Testis (tissue), 5 donors: ENCODE measurements at regions of chr3 and their contacts with region 1.

Region 1: DNA sequence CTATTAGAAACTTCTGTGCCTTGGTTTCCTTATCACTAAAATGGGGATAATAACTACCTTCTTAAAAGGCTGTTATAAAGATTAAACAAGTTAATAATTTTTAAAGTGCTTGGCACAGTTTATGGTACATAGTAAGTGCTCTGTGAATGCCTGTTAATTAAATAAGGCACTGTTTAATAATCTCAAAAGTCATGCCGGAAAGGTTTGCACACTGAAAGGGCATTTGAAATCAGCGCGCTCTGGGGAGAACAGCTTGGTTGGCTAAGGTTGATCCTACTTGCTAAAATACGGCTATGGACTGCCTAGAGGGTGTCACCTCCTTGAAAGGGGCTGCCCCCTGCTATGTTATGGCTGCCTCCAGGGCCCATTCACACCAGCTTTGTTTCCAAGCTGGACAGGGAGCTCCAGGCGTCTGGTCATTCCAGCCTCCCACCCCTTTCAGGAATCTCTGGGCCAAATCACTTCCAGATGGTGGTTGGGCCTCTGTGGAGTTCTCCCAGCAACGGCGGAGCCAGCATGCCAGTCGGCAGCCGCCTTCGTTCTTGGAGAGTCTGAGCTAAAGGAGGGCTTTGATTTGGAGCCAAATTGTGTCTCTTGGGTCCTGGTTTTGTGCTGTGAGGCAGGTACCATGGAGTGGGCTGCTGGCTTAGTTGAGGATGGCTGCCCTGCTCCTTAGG is 5.9 kb downstream of the FLNB start:
- DNase-seq: peak; percentile 61
- H3K4me3 ChIP-seq: no peak overlapping the region
- H3K27ac ChIP-seq: peak overlapping the region; percentile 8 to 43
- H3K4me1 ChIP-seq: peaks cover 50% of the 10 kb centered on the region
- H3K27me3 ChIP-seq: no peaks in the 10 kb centered on the region
- CTCF ChIP-seq: no peak
- POLR2A ChIP-seq: no peak

Region 2: DNA sequence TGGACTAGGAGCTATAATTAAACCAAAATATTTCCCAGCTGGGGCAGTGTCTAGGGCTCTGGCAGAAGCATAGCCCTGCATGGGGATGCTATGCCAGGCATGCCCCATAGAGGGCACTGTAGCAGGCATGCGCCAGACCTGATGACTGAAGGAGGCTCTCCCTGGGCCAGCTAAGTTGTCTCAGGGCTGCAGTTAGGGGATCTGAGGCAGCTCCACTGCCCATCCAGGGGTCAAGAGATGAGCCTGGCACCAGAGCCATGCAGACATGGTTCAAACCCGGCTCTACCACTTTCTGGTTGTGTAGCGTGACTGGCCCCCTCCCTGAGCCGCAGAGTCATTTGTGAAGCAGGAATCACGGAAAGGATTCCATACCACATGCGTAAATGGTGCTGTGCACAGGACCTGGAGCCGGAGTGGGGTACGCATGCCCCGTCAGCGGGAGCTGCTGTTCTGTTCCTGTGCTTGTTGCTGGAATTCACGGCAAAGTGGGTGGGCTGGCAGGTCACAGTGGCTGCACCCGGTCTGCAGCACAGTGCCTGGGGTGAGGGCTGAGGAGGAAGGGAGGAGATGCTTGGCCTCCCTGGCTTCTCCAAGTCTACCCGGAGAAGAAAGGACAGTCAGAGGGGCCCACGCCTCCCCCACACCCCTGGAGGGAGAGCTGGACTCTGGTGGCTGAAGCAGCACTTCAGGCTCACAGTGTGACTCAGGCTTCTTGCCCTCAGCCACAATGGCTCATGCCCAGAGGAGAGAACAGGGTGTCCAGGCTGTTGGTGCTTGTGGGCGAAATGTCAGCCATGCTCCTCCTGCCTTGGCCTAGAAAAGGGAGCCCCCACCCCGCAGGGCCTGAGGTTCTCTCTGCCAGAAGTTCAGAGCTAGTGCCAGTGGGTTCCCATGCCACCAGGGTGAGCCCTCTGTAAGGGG is 153.6 kb after region 1 on chr3:
- intact Hi-C with region 1: loop called (anchors 10 kb)
- DNase-seq: peak; percentile 81
- H3K4me3 ChIP-seq: no peak overlapping the region
- H3K27ac ChIP-seq: peak overlapping the region; percentile 50 to 64
- H3K4me1 ChIP-seq: peaks cover 46% of the 10 kb centered on the region
- H3K27me3 ChIP-seq: no peaks in the 10 kb centered on the region
- CTCF ChIP-seq: peak; percentile 65 to 87 (median 69)
- POLR2A ChIP-seq: no peak